Heart left ventricle (tissue), 16 donors: ENCODE measurements at regions of chr2 and their contacts with region 1.

Region 1: DNA sequence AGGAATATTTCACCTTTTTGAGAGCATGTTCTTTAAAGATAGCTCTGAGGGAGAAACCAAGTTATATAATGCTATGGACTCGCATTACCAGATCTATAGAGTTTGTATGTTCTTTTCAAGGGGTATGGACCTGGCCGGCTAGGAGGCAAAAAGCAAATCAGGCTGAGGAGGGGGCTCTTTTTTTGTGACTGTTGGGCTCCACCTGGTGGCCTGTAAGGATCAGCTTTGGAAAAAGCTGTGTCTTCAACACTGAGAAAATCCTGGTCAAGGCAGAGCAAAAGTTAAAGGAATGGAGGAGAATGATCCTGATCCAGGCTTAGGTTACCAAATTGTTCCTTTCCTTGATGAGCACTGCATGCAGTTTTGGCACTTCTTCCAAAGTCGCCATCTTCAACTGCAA is 180.5 kb downstream of the DIS3L2 start:
- DNase-seq: peak in 4 of 5 donors; percentile 17 to 38 (median 28)
- ATAC-seq: peak in 3 of 4 donors; percentile 48 to 65 (median 53)
- H3K4me3 ChIP-seq: no peak overlapping the region
- H3K27ac ChIP-seq: no peak overlapping the region
- H3K4me1 ChIP-seq: peaks cover 0 to 14% (median 2%) of the 10 kb centered on the region in 12 donors
- H3K27me3 ChIP-seq: no peaks in the 10 kb centered on the region
- CTCF ChIP-seq: peak; percentile 36 to 75 (median 68)
- POLR2A ChIP-seq: no peak

Region 2: DNA sequence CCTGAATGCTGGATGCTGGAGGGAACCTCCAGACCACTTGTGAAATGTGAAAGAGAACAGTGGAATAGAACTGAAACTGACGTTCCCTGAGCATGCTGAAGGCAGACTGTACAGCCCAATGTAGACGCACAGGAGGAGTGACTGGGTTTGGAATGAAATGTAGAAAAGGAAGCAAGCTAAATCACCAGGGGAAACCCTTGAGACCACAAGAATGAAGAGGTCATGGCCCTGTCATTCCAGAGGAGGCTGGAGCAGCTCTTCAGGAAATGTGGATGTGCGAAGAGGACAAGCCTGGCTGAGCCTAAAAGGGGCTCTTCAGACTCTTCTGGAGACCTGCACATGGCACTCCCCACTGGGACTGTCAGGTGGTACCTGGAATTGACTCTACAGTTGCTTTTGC is 118.0 kb after region 1 on chr2:
- intact Hi-C with region 1: no loop called
- DNase-seq: peak in 2 of 5 donors; percentile 25 to 34
- ATAC-seq: peak; percentile 54 to 68 (median 64)
- H3K4me3 ChIP-seq: peak overlapping the region in 1 of 12 donors; percentile 5
- H3K27ac ChIP-seq: no peak overlapping the region
- H3K4me1 ChIP-seq: peaks cover 0 to 19% (median 3%) of the 10 kb centered on the region in 12 donors
- H3K27me3 ChIP-seq: no peaks in the 10 kb centered on the region
- CTCF ChIP-seq: no peak
- POLR2A ChIP-seq: no peak

Region 3: GRCh38 chr2:232321156-232321816 is 179.2 kb after region 1 on chr2:
- intact Hi-C with region 1: loop called in 5 of 10 experiments (anchors 5 to 10 kb)
- DNase-seq: no peak
- ATAC-seq: no peak
- H3K4me3 ChIP-seq: no peak overlapping the region
- H3K27ac ChIP-seq: no peak overlapping the region
- H3K4me1 ChIP-seq: peaks cover 0 to 35% (median 7%) of the 10 kb centered on the region in 12 donors
- H3K27me3 ChIP-seq: no peaks in the 10 kb centered on the region
- CTCF ChIP-seq: no peak
- POLR2A ChIP-seq: no peak

Region 4: DNA sequence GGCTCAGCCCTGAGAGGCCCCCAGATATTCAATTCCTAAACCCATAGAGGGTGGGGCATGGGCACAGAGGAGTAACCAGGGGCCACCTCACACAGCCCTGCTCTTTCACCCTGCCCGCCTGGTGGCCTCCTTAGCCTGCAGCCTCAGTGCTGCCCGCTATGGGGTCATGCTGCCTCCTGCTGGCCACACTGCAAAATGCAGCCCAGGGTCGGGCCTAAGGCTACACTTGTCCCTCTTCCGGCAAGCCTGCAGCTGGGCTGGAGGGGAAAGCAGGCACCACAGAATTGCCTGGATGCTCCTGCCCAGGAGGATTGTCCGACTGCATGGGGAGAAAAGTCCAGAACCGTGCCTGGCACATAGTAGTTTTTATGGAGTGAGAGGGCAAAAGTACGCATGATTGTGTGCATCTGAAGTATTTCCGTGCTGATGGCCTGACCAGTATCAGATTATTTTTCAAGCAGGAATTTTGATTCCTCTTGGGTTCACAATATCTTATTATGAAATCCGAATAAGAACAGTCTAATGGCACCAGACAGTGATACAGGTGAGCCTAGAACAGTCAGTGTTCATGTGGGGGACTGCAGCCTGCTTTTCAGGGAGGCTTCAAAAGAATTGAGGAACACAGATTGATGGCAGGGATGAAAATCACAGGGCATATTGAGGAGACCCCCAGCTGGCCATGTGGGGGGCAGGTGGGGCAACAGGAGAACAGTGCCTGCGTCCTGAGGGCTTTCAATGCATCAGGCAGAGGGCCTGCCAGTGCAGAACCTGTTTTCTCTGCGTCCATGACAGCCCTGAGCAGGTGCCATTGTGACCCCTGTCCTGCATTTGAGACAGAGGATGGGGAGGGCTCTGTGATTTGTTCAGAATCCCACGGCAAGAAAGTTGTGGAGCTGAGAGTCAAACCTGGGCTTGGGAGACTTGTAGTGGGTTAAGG is 185.3 kb after region 1 on chr2:
- intact Hi-C with region 1: loop called in 5 of 10 experiments (anchors 5 to 10 kb)
- DNase-seq: peak; percentile 52 to 87 (median 62)
- ATAC-seq: peak; percentile 16 to 69 (median 60)
- H3K4me3 ChIP-seq: no peak overlapping the region
- H3K27ac ChIP-seq: no peak overlapping the region
- H3K4me1 ChIP-seq: peaks cover 0 to 8% (median 0%) of the 10 kb centered on the region in 12 donors
- H3K27me3 ChIP-seq: no peaks in the 10 kb centered on the region
- CTCF ChIP-seq: peak; percentile 65 to 86 (median 72)
- POLR2A ChIP-seq: no peak